Activated CD8-positive, alpha-beta T cell treated with anti-CD3 and anti-CD28 coated beads, Interleukin-2, amount 10 ng/mL, durations not matched to agents 7 days and 5 days (primary cell): ENCODE measurements at regions of chr14 and their contacts with region 1.

Region 1: GRCh38 chr14:88667555-88668273 is 104.9 kb downstream of the ZC3H14 start:
- DNase-seq: peak; percentile 64
- ATAC-seq: peak; percentile 86
- H3K4me3 Mint-ChIP-seq: no peak overlapping the region
- H3K27ac Mint-ChIP-seq: no peak overlapping the region
- H3K4me1 Mint-ChIP-seq: no peaks in the 10 kb centered on the region
- H3K27me3 Mint-ChIP-seq: no peaks in the 10 kb centered on the region

Region 2: GRCh38 chr14:88682495-88683114 is 14.9 kb after region 1 on chr14:
- CTCF ChIA-PET with region 1: interaction called, 20 read pairs
- POLR2A ChIA-PET with region 1: no interaction called
- DNase-seq: no peak
- ATAC-seq: no peak
- H3K4me3 Mint-ChIP-seq: no peak overlapping the region
- H3K27ac Mint-ChIP-seq: no peak overlapping the region
- H3K4me1 Mint-ChIP-seq: no peaks in the 10 kb centered on the region
- H3K27me3 Mint-ChIP-seq: no peaks in the 10 kb centered on the region

Region 3: DNA sequence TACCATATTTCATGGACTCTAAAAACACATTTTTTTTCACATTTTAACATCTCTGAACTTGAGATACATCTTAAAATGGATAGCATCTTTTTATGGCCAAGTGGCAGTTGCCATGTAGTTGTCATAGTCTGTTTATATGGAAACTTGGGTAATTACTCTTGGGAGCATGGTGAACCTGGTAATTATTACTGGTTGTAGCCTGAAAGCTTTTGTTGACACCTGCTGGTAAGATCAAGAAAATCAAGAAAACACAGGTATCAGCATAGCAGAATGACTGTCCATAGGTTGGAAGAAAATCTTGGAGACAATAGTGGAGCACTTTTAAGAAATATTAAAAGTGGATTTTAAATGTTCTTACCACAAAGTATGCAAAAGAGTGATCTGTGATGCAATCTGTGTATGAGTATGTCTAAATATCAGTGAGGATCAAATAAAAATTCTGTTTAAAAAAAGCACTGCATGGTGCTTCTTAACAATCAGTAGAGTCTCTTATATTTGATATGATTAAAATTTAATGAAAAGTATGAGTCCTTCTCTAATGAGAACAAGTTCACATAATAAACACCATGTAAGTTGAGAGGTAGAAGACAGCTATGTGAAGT is 200.9 kb after region 1 on chr14:
- CTCF ChIA-PET with region 1: interaction called, 19 read pairs
- POLR2A ChIA-PET with region 1: no interaction called
- DNase-seq: no peak
- ATAC-seq: no peak
- H3K4me3 Mint-ChIP-seq: no peak overlapping the region
- H3K27ac Mint-ChIP-seq: no peak overlapping the region
- H3K4me1 Mint-ChIP-seq: no peaks in the 10 kb centered on the region
- H3K27me3 Mint-ChIP-seq: no peaks in the 10 kb centered on the region